AG04449 (cell line): ENCODE measurements at regions of chr14 and their contacts with region 1.

Region 1: DNA sequence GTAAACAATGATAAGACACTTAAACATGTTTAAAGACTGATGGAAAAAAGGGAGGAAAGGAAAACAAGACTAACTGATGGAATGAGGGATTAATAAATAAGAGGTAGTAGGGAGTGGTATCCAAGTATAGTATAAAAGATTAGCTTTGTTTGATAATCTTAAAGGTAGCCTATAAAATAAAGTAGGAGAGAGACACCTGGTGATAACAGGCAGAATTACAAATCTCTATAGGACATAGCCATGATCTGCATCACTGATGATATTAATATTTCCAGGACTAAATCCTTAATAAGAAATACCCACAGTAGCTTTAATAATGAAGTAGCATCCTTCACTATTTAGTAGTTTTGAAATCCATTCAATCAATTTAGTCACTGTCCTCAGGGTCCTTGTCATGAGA is 30.4 kb downstream of the DLGAP5 start:
- DNase-seq: no peak
- H3K4me3 ChIP-seq: no peak overlapping the region
- CTCF ChIP-seq: peak; percentile 22

Region 2: DNA sequence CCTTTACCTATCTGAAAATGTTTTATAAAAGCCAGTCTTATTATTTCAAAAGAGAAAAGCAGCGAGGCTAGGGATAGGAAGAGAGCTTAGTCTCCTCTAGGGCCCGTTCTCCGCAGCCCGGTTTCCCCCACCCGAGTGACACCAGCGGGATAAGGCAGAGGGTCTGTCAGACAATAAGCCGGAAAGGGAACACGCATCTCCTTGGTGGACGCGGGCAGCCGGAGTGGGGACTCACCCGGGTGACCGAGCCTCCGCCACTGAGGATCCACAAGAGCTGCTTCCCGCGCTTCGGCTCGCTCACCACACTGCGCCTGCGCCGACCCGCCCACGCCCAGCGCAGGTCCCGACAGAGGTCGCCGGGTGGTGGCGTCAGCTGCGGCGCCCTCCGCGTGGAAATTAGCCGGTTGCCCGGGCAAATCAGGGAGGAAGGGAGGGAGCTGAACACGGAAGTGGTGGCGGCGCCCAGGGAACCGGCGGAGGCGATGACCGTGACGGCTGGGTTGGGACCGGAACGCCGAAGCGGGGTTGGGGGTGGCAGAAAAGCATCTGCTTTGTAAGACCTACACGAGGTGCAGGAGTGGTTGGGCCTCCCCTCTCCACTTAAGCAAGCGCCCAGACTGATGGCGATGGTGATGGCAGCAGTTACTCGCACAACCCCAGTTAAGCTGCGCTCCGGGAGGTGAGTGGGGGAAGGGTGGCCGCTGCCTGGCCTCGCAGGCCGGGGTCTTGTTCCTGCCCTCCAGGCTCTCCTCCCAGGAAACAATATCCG is 134.0 kb before region 1 on chr14 and contains the starts of genes SOCS4 and WDHD1:
- CTCF ChIA-PET with region 1: interaction called, 10 read pairs
- POLR2A ChIA-PET with region 1: no interaction called
- DNase-seq: peak; percentile 41
- H3K4me3 ChIP-seq: peak within 1 kb of the TSS; percentile 88
- CTCF ChIP-seq: peak; percentile 40

Region 3: DNA sequence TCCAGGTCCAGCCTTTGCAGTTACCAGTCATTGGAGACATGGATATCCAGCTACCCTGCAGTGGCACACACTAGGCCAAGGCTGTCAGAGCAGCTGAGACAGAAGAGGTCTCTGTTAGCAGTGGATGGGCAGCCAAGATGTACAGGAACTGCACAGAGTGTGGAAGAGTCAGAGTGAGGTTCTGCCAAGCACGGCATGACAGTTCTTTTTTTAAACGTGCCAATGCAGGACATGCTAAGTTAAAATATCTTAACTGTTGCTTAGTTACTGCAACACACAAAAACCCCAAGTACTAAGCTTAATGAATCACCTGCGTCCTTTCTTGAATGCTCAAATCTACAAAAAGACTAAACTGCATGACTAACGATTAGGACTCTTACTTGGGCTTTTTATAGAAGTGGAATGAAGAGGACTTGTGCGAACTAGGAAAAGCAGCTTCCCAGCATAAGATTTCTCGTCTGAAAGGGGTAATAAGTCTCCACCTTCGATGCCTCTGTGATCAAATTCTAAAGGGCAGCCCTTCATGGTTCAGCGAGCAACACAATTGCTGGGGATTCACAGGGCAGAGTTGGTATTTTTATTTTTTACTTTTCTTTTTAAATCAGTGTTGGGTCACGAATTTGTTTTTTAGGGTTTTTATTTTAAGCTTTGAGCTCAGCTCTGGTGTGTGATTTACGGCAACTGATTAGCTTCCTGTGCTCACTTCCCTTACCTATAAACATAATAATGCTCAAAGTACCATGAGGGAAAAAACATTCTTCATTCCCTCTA is 88.9 kb before region 1 on chr14:
- CTCF ChIA-PET with region 1: interaction called, 14 read pairs
- POLR2A ChIA-PET with region 1: no interaction called
- DNase-seq: peak; percentile 90
- H3K4me3 ChIP-seq: no peak overlapping the region
- CTCF ChIP-seq: no peak

Region 4: DNA sequence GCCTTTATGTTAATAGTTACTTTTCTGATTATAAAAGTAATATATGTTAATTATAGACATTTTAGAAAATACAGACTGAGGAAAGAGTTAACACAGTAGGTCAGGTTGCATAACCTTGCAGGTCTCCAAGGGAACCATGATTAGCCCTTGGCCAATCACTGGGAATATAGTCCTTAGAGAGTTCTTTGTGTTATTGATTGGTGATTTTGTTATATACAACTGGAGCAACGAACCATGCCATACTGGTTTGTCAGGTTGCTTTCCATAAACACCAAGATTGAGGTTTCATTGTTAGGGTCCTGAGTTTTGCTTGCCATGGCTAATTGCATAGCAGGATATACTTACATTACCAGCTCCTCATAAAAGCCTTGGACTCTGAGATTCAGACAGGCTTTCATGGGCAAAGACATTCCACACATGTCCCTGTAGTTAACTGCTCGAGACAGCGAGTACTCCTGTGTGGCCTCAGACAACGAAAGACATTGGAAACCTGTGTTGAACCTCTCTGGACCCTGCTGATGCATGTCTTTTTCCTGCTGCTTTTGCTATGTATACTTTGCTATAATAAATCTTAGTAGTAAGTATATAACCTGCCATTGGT is 75.8 kb before region 1 on chr14:
- CTCF ChIA-PET with region 1: interaction called, 174 read pairs
- POLR2A ChIA-PET with region 1: no interaction called
- DNase-seq: no peak
- H3K4me3 ChIP-seq: no peak overlapping the region
- CTCF ChIP-seq: no peak

Region 5: DNA sequence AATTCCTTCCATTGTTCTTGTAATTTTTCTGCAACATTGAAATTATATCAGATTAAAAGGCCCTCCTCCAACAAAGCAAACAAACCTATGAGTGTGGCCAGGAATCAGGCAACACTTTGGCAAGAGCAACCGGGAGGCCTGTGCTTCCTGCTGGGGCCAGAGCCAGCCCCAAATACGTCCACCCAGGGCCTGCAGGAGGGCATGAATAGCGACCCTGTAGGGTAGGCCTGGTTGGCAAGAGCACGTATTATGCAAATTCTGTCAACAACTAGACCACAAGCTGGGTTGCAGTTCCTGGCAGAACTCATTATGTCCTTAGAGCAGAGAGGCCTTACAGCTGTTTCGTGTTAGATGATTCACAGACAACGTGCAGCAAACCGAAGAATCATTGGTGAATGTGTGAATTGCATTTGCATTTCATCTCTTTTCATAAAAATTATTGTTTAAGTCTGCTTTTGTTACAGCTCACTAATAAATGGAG is 58.8 kb before region 1 on chr14:
- CTCF ChIA-PET with region 1: interaction called, 15 read pairs
- POLR2A ChIA-PET with region 1: no interaction called
- DNase-seq: peak; percentile 98
- H3K4me3 ChIP-seq: no peak overlapping the region
- CTCF ChIP-seq: no peak

Region 6: DNA sequence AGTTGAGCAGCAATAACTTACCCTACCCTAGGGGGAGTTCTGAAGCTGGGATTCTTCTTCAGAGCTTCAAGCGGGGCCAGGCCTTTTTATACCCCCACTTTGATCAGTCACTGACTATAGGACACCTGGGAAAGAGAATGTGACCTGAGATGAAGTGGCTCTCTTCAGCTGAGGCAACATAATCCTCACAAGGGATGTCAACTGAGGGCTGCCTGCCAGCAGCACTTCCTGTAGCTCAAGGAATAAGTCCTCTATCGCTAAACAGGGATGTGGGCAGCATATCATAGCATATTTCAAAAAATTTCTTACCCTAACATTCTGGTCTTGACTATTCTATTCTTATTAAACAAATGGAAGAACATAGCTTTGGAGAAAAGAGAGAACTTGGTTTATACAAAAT is 14.6 kb before region 1 on chr14:
- CTCF ChIA-PET with region 1: interaction called, 24 read pairs
- POLR2A ChIA-PET with region 1: interaction called, 3 read pairs
- DNase-seq: no peak
- H3K4me3 ChIP-seq: no peak overlapping the region
- CTCF ChIP-seq: no peak

Region 7: DNA sequence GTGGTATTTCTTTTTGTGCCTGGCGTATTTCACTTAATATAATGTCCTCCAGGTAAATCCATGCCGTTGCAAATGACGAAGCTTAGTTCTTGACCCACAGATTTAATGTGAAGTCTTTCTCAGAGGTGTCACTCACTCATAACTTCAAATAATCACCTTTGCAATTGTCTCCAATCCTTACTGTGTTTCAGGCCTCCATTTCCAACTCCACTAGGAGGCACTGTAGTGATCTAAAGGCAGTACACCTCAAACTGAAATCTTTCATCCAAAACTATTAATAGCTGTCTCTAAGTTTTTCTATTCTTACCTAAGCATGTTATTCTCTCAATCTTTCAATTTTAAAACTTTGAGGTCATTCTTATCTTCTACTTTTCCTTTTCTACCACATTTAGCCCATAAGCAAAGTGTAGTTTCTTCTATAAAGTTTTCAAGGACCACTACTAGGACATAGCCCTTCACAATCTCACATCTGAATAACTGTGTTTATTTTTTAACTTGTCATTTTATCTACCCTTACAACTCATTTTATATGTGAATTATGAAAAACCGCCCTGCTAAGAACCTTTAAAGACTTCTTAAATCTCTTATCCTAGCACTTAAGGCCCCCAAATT is 84.8 kb after region 1 on chr14:
- CTCF ChIA-PET with region 1: no interaction called
- POLR2A ChIA-PET with region 1: no interaction called
- DNase-seq: no peak
- H3K4me3 ChIP-seq: no peak overlapping the region
- CTCF ChIP-seq: peak; percentile 60